ENCODE measurements at regions of chr12 and their contacts with region 1.

Region 1: DNA sequence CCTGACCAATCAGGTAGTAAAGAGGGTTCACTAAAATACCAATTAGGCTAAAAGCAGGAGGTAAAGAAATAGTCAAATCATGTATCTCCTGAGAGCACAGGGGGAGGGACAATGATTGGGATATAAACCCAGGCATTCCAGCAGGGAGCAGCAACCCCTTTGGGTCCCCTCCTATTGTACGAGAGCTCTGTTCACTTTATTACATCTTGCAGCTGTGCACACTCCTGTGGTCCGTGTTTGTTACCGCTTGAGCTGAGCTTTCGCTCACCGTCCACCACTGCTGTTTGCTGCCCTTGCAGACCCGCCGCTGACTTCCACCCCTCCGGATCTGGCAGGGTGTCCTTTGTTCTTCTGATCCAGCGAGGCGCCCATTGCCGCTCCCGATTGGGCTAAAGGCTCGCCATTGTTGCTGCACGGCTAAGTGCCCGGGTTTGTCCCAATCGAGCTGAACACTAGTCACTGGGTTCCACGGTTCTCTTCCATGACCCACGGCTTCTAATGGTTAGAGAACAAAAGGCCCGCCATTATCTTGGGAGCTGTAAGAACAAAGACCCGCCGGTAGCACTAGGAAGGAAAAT is 64.1 kb downstream of the E2F7 start:
- DNase-seq: no peak
- H3K4me3 ChIP-seq: no peak overlapping the region
- H3K27ac ChIP-seq: no peak overlapping the region
- H3K4me1 ChIP-seq: no peaks in the 10 kb centered on the region
- H3K27me3 ChIP-seq: no peaks in the 10 kb centered on the region
- CTCF ChIP-seq: no peak

Region 2: DNA sequence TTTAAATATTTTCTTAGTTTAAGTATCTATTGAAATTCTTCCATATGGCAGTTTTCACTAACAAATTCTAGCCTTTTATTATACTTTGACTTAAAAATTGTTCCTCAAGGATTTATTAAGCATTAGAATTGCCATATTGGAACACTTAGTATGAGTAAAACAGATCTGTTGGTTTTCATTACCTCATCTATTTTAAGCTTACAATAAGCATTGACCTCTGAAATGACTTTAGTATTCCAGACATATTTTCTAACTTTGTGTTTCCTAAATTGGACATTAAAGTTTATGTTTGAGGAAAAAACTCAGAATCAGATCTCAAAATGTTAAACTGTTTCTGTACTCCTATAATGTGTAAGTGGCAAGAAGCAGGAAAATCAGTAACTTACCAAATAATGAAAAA is 170.8 kb before region 1 on chr12:
- intact Hi-C with region 1: loop called (anchors 10 kb)
- DNase-seq: no peak
- H3K4me3 ChIP-seq: no peak overlapping the region
- H3K27ac ChIP-seq: no peak overlapping the region
- H3K4me1 ChIP-seq: no peaks in the 10 kb centered on the region
- H3K27me3 ChIP-seq: no peaks in the 10 kb centered on the region
- CTCF ChIP-seq: no peak